Dendritic cell treated with granulocyte-macrophage colony-stimulating factor and Interleukin-4, amounts not matched to agents 40 ng/mL and 50 ng/mL, for 4 days (primary cell): ENCODE measurements at regions of chr17 and their contacts with region 1.

Region 1: GRCh38 chr17:36545465-36546417 is 1.0 kb downstream of the GGNBP2 start:
- H3K4me3 Mint-ChIP-seq: peak overlapping the region; percentile 98
- H3K27ac Mint-ChIP-seq: peak overlapping the region; percentile 99
- H3K4me1 Mint-ChIP-seq: peaks cover 26% of the 10 kb centered on the region
- H3K27me3 Mint-ChIP-seq: no peaks in the 10 kb centered on the region

Region 2: DNA sequence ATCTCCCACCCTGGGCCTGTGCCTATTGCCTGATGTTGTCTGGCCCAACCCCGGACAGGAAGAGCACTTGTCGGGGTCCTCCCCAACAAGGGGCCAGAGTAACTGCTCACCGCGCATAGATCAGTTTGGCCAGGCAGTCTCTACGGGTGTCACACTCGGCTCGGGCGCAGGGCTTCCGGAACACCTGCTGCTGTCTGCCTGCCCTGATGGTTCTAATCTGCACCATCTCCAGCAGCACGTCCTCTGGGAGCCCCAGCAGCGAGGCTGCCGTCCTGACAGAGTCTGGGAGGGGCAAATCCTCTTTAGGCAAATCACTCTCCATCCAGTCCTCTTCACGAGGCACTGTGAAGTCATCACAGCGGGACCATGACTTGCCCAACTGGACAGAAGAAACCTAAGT is 35.1 kb before region 1 on chr17:
- intact Hi-C with region 1: no loop called
- H3K4me3 Mint-ChIP-seq: no peak overlapping the region
- H3K27ac Mint-ChIP-seq: no peak overlapping the region
- H3K4me1 Mint-ChIP-seq: no peaks in the 10 kb centered on the region
- H3K27me3 Mint-ChIP-seq: no peaks in the 10 kb centered on the region

Region 3: DNA sequence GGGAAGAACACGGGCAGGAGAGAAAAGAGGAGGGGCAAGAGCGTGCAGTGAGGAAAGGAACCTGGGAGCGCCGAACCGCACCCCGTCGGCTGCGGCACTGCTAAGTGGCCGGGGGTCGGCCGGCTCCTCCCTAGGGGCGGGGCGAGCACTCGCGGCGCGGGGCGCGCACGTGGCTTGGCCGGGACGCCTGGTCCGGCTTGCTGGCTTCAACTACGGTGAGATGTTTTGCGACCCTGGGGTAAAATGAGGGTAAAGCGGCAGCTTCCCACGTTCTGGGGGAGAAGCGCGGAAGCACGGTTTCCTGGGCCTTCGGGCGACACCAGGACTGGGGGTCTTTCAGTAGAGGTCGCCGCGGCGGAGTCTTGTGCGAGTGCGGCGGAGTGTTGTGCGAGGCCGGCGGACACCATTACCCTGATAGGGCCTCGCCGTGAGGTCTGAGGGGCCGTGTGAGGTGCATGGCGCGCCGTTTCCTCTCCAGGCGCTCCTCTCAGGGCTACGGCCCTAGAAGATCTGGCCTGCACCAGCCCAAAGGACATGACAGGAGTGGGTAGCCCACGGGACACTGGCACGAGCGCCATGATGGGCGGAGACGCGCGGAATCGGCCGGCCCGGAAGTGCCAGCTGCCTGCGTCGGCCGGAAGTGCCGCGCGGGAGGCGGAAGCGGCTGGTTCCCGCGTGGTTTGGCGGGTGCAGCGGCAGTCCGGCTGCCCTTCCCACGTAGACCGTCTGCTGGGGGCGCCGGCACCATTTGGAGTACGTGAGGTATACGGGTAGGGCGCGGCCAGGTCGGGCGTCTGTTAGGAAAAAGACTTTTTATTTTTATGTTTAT is 10.7 kb before region 1 on chr17 and contains the starts of genes MYO19 and PIGW:
- intact Hi-C with region 1: loop called (anchors 1 kb)
- H3K4me3 Mint-ChIP-seq: peak within 1 kb of the TSS; percentile 97
- H3K27ac Mint-ChIP-seq: peak within 1 kb of the TSS; percentile 97
- H3K4me1 Mint-ChIP-seq: peaks cover 26% of the 10 kb centered on the region
- H3K27me3 Mint-ChIP-seq: no peaks in the 10 kb centered on the region

Region 4: DNA sequence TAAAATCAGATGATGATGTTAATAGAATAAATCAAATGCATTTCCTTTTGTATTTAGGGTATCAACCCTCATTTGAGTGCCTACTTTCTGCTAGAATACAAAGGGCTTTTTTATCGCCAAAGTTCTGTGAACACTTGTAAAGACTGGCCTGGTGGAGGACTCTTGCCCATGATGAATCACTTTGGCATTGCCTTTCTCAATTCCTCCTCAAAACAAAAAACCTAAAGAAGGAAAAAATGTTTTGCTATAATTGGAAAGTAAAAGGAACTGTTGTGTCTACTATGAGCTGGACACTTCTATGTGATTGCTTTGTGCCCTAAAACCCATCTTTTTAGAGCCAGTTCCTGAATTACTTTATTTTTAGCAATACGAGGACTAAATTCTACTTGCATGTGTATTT is 32.9 kb after region 1 on chr17:
- intact Hi-C with region 1: no loop called
- H3K4me3 Mint-ChIP-seq: no peak overlapping the region
- H3K27ac Mint-ChIP-seq: no peak overlapping the region
- H3K4me1 Mint-ChIP-seq: no peaks in the 10 kb centered on the region
- H3K27me3 Mint-ChIP-seq: no peaks in the 10 kb centered on the region

Region 5: GRCh38 chr17:36591434-36592315 is 45.9 kb after region 1 on chr17 and contains the start of gene DHRS11:
- intact Hi-C with region 1: loop called (anchors 5 kb)
- H3K4me3 Mint-ChIP-seq: peak within 1 kb of the TSS; percentile 82
- H3K27ac Mint-ChIP-seq: peak within 1 kb of the TSS; percentile 53
- H3K4me1 Mint-ChIP-seq: peaks cover 27% of the 10 kb centered on the region
- H3K27me3 Mint-ChIP-seq: peaks cover 17% of the 10 kb centered on the region

Region 6: GRCh38 chr17:36948717-36949460 is 403.1 kb after region 1 on chr17 and contains the start of gene AATF:
- intact Hi-C with region 1: loop called (anchors 5 kb)
- H3K4me3 Mint-ChIP-seq: peak within 1 kb of the TSS; percentile 95
- H3K27ac Mint-ChIP-seq: peak within 1 kb of the TSS; percentile 91
- H3K4me1 Mint-ChIP-seq: peaks cover 46% of the 10 kb centered on the region
- H3K27me3 Mint-ChIP-seq: peaks cover 38% of the 10 kb centered on the region